Heart right ventricle (tissue), 16 donors: ENCODE measurements at regions of chr16 and their contacts with region 1.

Region 1: GRCh38 chr16:9008601-9009260 is 45.0 kb upstream of the USP7 start:
- DNase-seq: peak; percentile 73
- ATAC-seq: peak; percentile 86 to 97 (median 92)
- H3K4me3 ChIP-seq: peak overlapping the region in 8 of 10 donors; percentile 7 to 52 (median 36)
- H3K27ac ChIP-seq: no peak overlapping the region
- H3K4me1 ChIP-seq: peaks cover 0 to 8% (median 7%) of the 10 kb centered on the region in 9 donors
- H3K27me3 ChIP-seq: peaks cover 0 to 16% (median 7%) of the 10 kb centered on the region in 7 donors
- CTCF ChIP-seq: peak; percentile 71 to 91 (median 85)

Region 2: DNA sequence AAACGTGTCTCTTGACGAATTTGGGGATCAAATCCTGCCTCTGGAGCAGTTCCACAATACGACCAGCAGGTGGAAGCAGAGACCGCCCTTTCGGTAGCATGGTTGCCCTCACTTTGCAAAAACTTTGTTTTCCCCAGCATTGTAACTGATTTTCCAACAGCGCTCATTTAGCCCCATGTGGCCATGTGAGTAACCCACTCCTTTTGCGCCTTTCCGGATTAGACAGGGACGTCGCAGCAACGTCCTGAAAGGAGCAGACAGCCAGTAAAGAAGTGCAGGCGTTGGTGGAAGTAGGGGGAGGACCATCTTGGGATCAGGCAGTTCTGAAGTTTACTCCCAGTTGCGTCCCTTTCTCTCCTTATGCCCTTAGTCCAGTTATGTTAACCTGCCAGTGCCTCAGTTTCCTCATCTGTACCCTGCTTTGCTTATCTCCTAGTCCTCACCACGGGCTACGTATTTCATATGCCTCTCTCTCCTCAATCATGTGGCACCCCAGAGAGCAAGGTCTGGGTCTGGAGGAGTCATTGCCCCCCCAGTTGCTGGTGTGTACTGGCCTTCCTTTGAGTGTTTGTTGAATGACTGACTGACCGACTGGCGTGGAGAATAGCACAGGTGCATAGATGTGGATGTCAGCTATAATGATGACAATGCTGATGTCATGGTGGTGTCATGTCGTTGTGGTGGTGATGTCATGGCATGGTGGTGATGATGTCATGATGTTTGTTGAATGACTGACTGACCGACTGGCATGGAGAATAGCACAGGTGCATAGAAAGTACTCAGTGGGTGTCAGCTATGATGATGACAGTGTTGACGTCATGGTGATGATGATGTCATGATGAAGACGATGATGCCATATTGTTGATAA is 440.7 kb before region 1 on chr16:
- intact Hi-C with region 1: loop called in 3 of 10 experiments (anchors 5 to 10 kb)
- DNase-seq: peak; percentile 40 to 70
- ATAC-seq: peak; percentile 65 to 84 (median 74)
- H3K4me3 ChIP-seq: no peak overlapping the region
- H3K27ac ChIP-seq: no peak overlapping the region
- H3K4me1 ChIP-seq: peaks cover 0 to 20% (median 0%) of the 10 kb centered on the region in 9 donors
- H3K27me3 ChIP-seq: peaks cover 0 to 18% (median 10%) of the 10 kb centered on the region in 7 donors
- CTCF ChIP-seq: peak; percentile 93 to 98 (median 97)

Region 3: DNA sequence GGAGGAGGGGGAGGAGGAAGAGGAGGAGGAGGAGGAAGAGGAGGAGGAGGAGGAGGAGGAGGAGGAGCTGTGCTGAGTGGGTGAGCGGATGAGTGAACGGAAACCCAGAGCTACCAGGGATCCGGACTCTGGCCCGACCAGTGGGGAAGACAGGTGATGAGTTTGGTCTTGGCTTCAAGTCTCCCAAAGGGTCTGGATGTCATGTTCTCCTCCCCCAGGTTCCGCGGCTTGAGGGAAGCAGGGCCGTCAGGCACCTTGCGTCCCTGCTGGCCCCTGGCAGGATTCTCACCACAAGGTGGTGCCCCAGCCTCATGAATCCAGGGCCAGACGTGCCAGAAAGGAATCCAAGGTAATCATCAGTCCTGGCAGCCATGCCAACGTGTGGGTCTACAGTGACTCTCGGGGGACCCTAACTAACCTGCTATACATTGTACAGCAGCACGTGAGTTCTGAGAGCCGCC is 347.9 kb before region 1 on chr16:
- intact Hi-C with region 1: loop called in 3 of 10 experiments (anchors 10 kb)
- DNase-seq: peak; percentile 24 to 40
- ATAC-seq: peak; percentile 49 to 90 (median 84)
- H3K4me3 ChIP-seq: no peak overlapping the region
- H3K27ac ChIP-seq: no peak overlapping the region
- H3K4me1 ChIP-seq: no peaks in the 10 kb centered on the region
- H3K27me3 ChIP-seq: no peaks in the 10 kb centered on the region
- CTCF ChIP-seq: peak in 8 of 9 donors; percentile 25 to 71 (median 64)

Region 4: DNA sequence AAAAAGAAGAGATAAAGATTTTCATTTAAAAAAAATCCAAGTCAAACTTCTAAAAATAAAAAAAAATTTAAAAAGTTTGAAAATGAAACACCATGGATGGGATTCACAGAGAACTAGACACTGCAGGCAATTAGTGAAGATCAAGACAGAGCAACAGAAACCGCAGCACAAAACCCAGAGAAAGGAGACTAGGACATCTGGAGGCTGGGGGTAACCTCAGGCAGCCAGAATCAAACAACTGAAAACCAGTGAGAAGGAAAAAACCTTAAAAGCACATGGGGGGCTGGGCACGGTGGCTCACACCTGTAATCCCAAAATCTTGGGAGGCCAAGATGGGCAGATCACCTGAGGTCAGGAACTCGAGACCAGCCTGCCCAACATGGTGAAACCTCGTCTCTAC is 95.9 kb before region 1 on chr16:
- intact Hi-C with region 1: loop called in 4 of 10 experiments (anchors 5 to 10 kb)
- DNase-seq: no peak
- ATAC-seq: no peak
- H3K4me3 ChIP-seq: no peak overlapping the region
- H3K27ac ChIP-seq: no peak overlapping the region
- H3K4me1 ChIP-seq: peaks cover 0 to 7% (median 0%) of the 10 kb centered on the region in 9 donors
- H3K27me3 ChIP-seq: no peaks in the 10 kb centered on the region
- CTCF ChIP-seq: no peak

Region 5: DNA sequence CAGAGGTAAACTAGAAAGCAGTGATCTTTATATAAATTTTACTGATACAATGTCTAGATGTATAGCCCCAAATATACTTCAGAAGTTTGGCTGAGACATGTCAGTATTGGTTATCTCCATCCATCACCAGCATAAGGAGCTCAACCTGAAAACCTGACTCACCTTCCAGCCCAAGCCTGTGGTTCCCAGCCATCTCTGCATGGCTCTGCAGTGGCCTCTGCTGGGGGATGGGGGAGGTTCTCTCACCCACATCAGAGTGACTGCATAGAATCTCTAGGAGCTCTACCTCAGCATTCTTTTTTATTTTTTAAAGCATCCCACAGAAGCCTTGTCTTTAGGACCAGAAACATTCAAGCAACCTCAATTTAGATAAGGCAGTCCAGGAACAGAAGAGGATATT is 72.3 kb before region 1 on chr16:
- intact Hi-C with region 1: loop called in 1 of 10 experiments (anchors 10 kb)
- DNase-seq: no peak
- ATAC-seq: peak in 5 of 8 donors; percentile 26 to 64 (median 52)
- H3K4me3 ChIP-seq: no peak overlapping the region
- H3K27ac ChIP-seq: no peak overlapping the region
- H3K4me1 ChIP-seq: peaks cover 7 to 83% (median 67%) of the 10 kb centered on the region in 9 donors
- H3K27me3 ChIP-seq: no peaks in the 10 kb centered on the region
- CTCF ChIP-seq: peak in 7 of 9 donors; percentile 29 to 56 (median 47)

Region 6: GRCh38 chr16:8972843-8973586 is 35.7 kb before region 1 on chr16:
- intact Hi-C with region 1: loop called in 1 of 10 experiments (anchors 5 kb)
- DNase-seq: no peak
- ATAC-seq: no peak
- H3K4me3 ChIP-seq: no peak overlapping the region
- H3K27ac ChIP-seq: no peak overlapping the region
- H3K4me1 ChIP-seq: no peaks in the 10 kb centered on the region
- H3K27me3 ChIP-seq: no peaks in the 10 kb centered on the region
- CTCF ChIP-seq: no peak

Region 7: DNA sequence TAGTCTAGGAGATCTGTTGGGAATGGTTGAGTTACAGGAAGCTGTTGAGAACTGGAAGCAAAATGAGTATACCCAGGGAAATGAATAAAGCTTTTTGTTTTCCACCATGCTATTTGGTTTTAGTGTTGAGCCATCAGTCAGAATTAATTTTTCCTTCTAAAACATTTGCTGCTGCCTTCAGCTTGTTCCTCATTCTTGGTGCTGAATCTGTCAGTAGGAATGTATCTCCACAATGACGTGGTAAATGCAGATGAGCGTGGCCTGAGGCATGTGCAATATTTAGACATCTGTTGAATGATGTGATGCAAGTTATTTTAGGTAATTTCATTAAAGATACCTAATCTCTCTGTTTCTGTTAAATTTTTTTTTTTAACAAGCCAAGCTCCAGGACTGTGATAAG is 93.6 kb after region 1 on chr16:
- intact Hi-C with region 1: no loop called
- DNase-seq: no peak
- ATAC-seq: peak in 1 of 8 donors; percentile 51
- H3K4me3 ChIP-seq: no peak overlapping the region
- H3K27ac ChIP-seq: peak overlapping the region in 3 of 10 donors; percentile 21 to 39 (median 37)
- H3K4me1 ChIP-seq: peaks cover 27 to 100% (median 100%) of the 10 kb centered on the region in 9 donors
- H3K27me3 ChIP-seq: no peaks in the 10 kb centered on the region
- CTCF ChIP-seq: no peak